PC-3 (cell line): ENCODE measurements at regions of chr7 and their contacts with region 1.

Region 1: DNA sequence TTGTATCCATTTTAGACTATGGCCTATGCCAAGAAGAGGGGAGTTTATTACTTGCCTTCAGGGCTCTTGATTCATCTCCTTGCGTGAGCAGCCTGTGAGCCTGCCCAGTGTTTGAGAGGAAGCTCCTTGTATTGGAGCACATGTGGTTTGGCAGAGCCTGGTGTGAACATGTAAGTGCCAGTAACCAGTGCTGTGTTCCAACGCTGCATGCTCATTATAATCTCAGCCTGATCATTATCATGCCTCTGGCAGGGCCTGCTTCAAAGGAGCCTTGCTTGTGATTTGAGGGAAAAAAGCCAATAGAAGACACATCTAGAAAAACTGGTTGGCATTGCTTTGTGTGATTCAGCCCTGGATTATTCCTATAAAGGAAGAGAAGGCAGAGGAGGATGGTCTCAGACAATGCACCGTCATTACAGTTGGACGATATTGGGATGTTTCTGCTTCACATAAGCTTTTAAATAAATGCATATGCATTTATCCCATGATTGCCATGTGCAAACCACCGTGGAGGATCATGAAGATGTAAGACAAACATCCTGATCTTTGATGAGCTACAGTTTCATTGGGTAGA is 203.4 kb upstream of the AHR start:
- DNase-seq: peak; percentile 97
- ATAC-seq: peak; percentile 83
- H3K4me3 ChIP-seq: no peak overlapping the region
- H3K27ac ChIP-seq: peak overlapping the region; percentile 94
- H3K4me1 ChIP-seq: peaks cover 62% of the 10 kb centered on the region
- H3K27me3 ChIP-seq: no peaks in the 10 kb centered on the region
- CTCF ChIP-seq: no peak

Region 2: GRCh38 chr7:16891338-16891737 is 203.8 kb before region 1 on chr7:
- CTCF ChIA-PET with region 1: no interaction called
- POLR2A ChIA-PET with region 1: interaction called, 21 read pairs
- intact Hi-C with region 1: no loop called
- DNase-seq: peak; percentile 85
- ATAC-seq: peak; percentile 87
- H3K4me3 ChIP-seq: no peak overlapping the region
- H3K27ac ChIP-seq: peak overlapping the region; percentile 45
- H3K4me1 ChIP-seq: peaks cover 37% of the 10 kb centered on the region
- H3K27me3 ChIP-seq: no peaks in the 10 kb centered on the region
- CTCF ChIP-seq: peak; percentile 88

Region 3: GRCh38 chr7:17041324-17041723 is 53.8 kb before region 1 on chr7:
- CTCF ChIA-PET with region 1: no interaction called
- POLR2A ChIA-PET with region 1: no interaction called
- intact Hi-C with region 1: loop called (anchors 1 kb)
- DNase-seq: peak; percentile 87
- ATAC-seq: peak; percentile 71
- H3K4me3 ChIP-seq: peak overlapping the region; percentile 9; the same call in 1 of the 2 replicates
- H3K27ac ChIP-seq: peak overlapping the region; percentile 80
- H3K4me1 ChIP-seq: peaks cover 53% of the 10 kb centered on the region
- H3K27me3 ChIP-seq: no peaks in the 10 kb centered on the region
- CTCF ChIP-seq: no peak

Region 4: DNA sequence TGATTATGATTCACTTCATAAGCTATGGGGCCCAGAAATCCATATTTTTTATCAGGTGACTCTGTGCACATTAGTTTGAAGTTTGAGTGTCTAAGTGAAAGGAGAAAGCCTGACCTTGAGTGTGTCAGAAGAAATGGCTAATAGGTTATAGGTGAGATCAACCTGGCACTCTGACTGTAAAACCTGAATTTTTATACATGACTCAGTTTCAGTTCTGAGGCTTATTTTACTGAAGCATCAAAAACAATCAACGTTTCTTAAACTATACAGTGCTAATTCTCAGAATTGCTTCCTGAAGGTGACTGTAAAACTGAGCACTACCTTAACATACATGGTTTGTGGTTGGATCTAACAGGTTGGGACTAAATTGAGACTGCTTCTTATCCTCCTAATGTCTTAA is 44.0 kb after region 1 on chr7:
- CTCF ChIA-PET with region 1: no interaction called
- POLR2A ChIA-PET with region 1: no interaction called
- intact Hi-C with region 1: loop called (anchors 2 kb)
- DNase-seq: peak; percentile 56
- ATAC-seq: peak; percentile 20
- H3K4me3 ChIP-seq: peak overlapping the region; percentile 7; the same call in 1 of the 2 replicates
- H3K27ac ChIP-seq: peak overlapping the region; percentile 95
- H3K4me1 ChIP-seq: peaks cover 56% of the 10 kb centered on the region
- H3K27me3 ChIP-seq: no peaks in the 10 kb centered on the region
- CTCF ChIP-seq: no peak

Region 5: DNA sequence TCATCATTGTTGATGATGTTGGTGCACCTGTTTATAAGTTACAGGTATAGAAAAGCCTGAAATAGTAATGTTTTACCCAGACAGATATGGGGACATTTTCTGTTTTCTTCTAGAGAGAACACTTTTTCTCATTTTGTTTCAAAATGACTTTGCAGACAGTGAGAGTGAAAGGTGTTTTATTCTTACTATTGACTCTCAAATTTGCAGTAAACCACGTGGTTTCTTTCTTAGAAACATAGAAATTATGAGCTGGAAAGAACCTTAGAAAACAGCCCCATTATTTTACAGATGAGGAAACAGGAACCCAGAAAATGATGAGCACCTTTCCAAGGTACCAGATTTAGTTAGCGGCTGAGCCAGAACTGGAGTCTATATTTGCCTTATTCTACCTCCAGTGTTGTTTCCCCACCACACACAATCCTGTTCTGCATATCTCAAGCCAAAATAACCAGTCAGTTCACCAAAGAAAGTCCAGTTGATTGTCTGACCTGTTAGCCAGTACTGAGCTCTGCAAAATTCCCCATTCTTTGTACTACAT is 64.5 kb after region 1 on chr7:
- CTCF ChIA-PET with region 1: no interaction called
- POLR2A ChIA-PET with region 1: no interaction called
- intact Hi-C with region 1: no loop called
- DNase-seq: no peak
- ATAC-seq: no peak
- H3K4me3 ChIP-seq: no peak overlapping the region
- H3K27ac ChIP-seq: no peak overlapping the region
- H3K4me1 ChIP-seq: no peaks in the 10 kb centered on the region
- H3K27me3 ChIP-seq: no peaks in the 10 kb centered on the region
- CTCF ChIP-seq: no peak

Region 6: GRCh38 chr7:17275749-17276671 is 180.9 kb after region 1 on chr7:
- CTCF ChIA-PET with region 1: interaction called, 3 read pairs
- POLR2A ChIA-PET with region 1: no interaction called
- intact Hi-C with region 1: loop called (anchors 1 kb)
- DNase-seq: peak; percentile 92
- ATAC-seq: peak; percentile 91
- H3K4me3 ChIP-seq: peak overlapping the region; percentile 8; the same call in 1 of the 2 replicates
- H3K27ac ChIP-seq: peak overlapping the region; percentile 78
- H3K4me1 ChIP-seq: peaks cover 34% of the 10 kb centered on the region
- H3K27me3 ChIP-seq: no peaks in the 10 kb centered on the region
- CTCF ChIP-seq: no peak